ENCODE measurements at regions of chr5 and their contacts with region 1.

Region 1: GRCh38 chr5:72280581-72281170 is 39.4 kb downstream of the MRPS27 start:
- DNase-seq: peak; percentile 75
- H3K4me3 ChIP-seq: no peak overlapping the region
- H3K27ac ChIP-seq: peak overlapping the region; percentile 90
- H3K4me1 ChIP-seq: peaks cover 40% of the 10 kb centered on the region
- H3K27me3 ChIP-seq: no peaks in the 10 kb centered on the region
- CTCF ChIP-seq: peak; percentile 81

Region 2: GRCh38 chr5:72138943-72139521 is 141.6 kb before region 1 on chr5:
- CTCF ChIA-PET with region 1: no interaction called
- POLR2A ChIA-PET with region 1: no interaction called
- intact Hi-C with region 1: loop called (anchors 5 kb)
- DNase-seq: no peak
- H3K4me3 ChIP-seq: no peak overlapping the region
- H3K27ac ChIP-seq: no peak overlapping the region
- H3K4me1 ChIP-seq: peaks cover 52% of the 10 kb centered on the region
- H3K27me3 ChIP-seq: no peaks in the 10 kb centered on the region
- CTCF ChIP-seq: no peak

Region 3: GRCh38 chr5:72248352-72249032 is 32.2 kb before region 1 on chr5:
- CTCF ChIA-PET with region 1: interaction called, 10 read pairs
- POLR2A ChIA-PET with region 1: no interaction called
- intact Hi-C with region 1: no loop called
- DNase-seq: peak; percentile 84
- H3K4me3 ChIP-seq: no peak overlapping the region
- H3K27ac ChIP-seq: peak overlapping the region; percentile 53
- H3K4me1 ChIP-seq: peaks cover 71% of the 10 kb centered on the region
- H3K27me3 ChIP-seq: no peaks in the 10 kb centered on the region
- CTCF ChIP-seq: no peak

Region 4: GRCh38 chr5:72328172-72328571 is 47.5 kb after region 1 on chr5:
- CTCF ChIA-PET with region 1: no interaction called
- POLR2A ChIA-PET with region 1: no interaction called
- intact Hi-C with region 1: no loop called
- DNase-seq: peak; percentile 50
- H3K4me3 ChIP-seq: no peak overlapping the region
- H3K27ac ChIP-seq: no peak overlapping the region
- H3K4me1 ChIP-seq: no peaks in the 10 kb centered on the region
- H3K27me3 ChIP-seq: no peaks in the 10 kb centered on the region
- CTCF ChIP-seq: no peak